Right ventricle myocardium superior (tissue), 1 donor: ENCODE measurements at regions of chr22 and their contacts with region 1.

Region 1: GRCh38 chr22:30920407-30920806 is 48.2 kb downstream of the MORC2 start:
- DNase-seq: peak; percentile 91
- ATAC-seq: peak; percentile 75

Region 2: GRCh38 chr22:30628491-30628890 is 291.9 kb before region 1 on chr22:
- intact Hi-C with region 1: loop called (anchors 10 kb)
- DNase-seq: no peak
- ATAC-seq: peak; percentile 91

Region 3: DNA sequence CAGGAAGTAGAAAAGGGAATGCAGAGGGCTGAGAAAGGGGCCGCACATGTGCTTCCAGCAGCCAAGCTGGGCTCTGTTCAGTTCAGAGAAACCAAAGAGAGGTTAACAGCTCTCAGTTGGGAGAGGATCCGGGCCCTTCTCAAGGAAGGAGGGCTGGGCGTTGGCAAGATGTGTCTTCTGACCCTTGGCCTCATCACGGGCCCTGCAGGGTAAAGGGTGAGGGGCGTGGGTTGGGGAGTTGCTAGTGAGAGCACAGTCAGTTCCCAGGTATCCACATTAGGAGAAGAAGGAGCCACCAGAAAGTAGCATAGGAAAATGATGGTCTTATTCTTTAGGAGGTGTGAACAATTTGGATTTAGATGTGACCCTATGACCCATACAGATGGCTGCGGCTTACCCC is 152.7 kb before region 1 on chr22:
- intact Hi-C with region 1: loop called (anchors 5 kb)
- DNase-seq: no peak
- ATAC-seq: no peak

Region 4: GRCh38 chr22:31062566-31063230 is 142.3 kb after region 1 on chr22:
- intact Hi-C with region 1: no loop called
- DNase-seq: no peak
- ATAC-seq: no peak